PC-3 (cell line): ENCODE measurements at regions of chr9 and their contacts with region 1.

Region 1: GRCh38 chr9:91346652-91347051 is 15.1 kb downstream of the AUH start:
- DNase-seq: peak; percentile 33
- ATAC-seq: peak; percentile 40
- H3K4me3 ChIP-seq: no peak overlapping the region
- H3K27ac ChIP-seq: peak overlapping the region; percentile 79
- H3K4me1 ChIP-seq: peaks cover 45% of the 10 kb centered on the region
- H3K27me3 ChIP-seq: no peaks in the 10 kb centered on the region
- CTCF ChIP-seq: no peak

Region 2: DNA sequence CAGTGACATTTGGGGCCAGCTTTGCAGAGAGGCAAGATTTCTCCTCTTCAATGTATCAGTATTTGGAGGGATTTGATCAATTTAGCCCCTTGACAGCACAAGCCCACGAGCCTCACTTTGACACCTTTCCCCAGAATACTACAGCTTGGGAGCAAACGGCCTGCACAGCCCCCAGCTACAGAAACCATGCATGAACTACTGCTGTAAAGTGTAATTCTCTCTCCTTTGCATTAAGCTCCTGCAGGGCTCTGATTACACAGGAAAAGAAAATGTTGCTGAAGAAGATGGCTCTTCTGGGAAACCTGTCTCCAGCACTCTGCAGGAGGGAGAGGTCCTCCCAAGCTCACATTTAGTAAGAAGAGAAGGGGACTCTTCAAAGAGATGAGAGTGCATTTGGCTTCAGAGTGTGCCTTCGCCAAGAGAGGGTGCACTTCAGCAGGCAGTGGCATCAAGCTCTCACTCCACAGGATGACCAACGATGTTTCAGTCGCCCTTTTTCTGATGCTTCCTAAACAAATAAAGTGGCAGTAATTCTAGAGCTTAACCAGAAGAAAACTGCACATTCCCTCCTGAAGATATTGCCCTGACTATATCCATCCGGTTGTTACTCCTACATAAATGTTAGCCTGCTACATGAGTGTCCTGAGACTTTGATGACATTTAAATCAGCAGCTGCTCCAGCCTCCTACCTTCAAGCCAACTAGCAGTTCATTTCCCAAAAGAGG is 257.1 kb before region 1 on chr9:
- CTCF ChIA-PET with region 1: no interaction called
- POLR2A ChIA-PET with region 1: no interaction called
- intact Hi-C with region 1: loop called (anchors 5 kb)
- DNase-seq: peak; percentile 64
- ATAC-seq: peak; percentile 96
- H3K4me3 ChIP-seq: no peak overlapping the region
- H3K27ac ChIP-seq: 0 out of 2 replicates have a peak overlapping the region, but pooled peaks have one; percentile 6
- H3K4me1 ChIP-seq: no peaks in the 10 kb centered on the region
- H3K27me3 ChIP-seq: no peaks in the 10 kb centered on the region
- CTCF ChIP-seq: peak; percentile 67

Region 3: GRCh38 chr9:91119142-91119541 is 227.5 kb before region 1 on chr9:
- CTCF ChIA-PET with region 1: no interaction called
- POLR2A ChIA-PET with region 1: no interaction called
- intact Hi-C with region 1: no loop called
- DNase-seq: peak; percentile 67
- ATAC-seq: peak; percentile 66
- H3K4me3 ChIP-seq: peak overlapping the region; percentile 34; the same call in 1 of the 2 replicates
- H3K27ac ChIP-seq: peak overlapping the region; percentile 84
- H3K4me1 ChIP-seq: peaks cover 23% of the 10 kb centered on the region
- H3K27me3 ChIP-seq: no peaks in the 10 kb centered on the region
- CTCF ChIP-seq: no peak

Region 4: DNA sequence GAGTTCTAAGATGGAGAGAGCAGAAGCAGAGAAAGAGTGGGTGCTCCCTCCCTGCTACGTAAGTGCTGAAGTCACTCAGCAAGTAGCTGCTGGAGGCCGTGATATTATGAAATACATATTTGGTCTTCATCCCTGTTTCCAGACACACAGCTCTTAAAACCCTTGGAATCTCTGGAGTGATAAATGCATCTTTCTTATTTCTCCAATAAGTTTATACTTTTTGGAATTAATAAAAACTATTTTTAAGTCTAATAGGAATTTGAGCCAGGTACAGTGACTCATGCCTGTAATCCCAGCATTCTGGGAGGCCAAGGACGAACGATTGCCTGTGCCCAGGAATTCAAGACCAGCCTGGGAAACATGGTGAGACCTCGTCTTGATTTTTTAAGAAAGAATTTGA is 45.5 kb before region 1 on chr9:
- CTCF ChIA-PET with region 1: no interaction called
- POLR2A ChIA-PET with region 1: no interaction called
- intact Hi-C with region 1: loop called (anchors 2 kb)
- DNase-seq: peak; percentile 35
- ATAC-seq: no peak
- H3K4me3 ChIP-seq: 0 out of 2 replicates have a peak overlapping the region, but pooled peaks have one; percentile 21
- H3K27ac ChIP-seq: peak overlapping the region; percentile 61
- H3K4me1 ChIP-seq: peaks cover 31% of the 10 kb centered on the region
- H3K27me3 ChIP-seq: no peaks in the 10 kb centered on the region
- CTCF ChIP-seq: no peak

Region 5: GRCh38 chr9:91415290-91415689 is 68.6 kb after region 1 on chr9:
- CTCF ChIA-PET with region 1: no interaction called
- POLR2A ChIA-PET with region 1: interaction called, 4 read pairs
- intact Hi-C with region 1: loop called (anchors 2 kb)
- DNase-seq: no peak
- ATAC-seq: no peak
- H3K4me3 ChIP-seq: no peak overlapping the region
- H3K27ac ChIP-seq: no peak overlapping the region
- H3K4me1 ChIP-seq: peaks cover 55% of the 10 kb centered on the region
- H3K27me3 ChIP-seq: no peaks in the 10 kb centered on the region
- CTCF ChIP-seq: no peak

Region 6: DNA sequence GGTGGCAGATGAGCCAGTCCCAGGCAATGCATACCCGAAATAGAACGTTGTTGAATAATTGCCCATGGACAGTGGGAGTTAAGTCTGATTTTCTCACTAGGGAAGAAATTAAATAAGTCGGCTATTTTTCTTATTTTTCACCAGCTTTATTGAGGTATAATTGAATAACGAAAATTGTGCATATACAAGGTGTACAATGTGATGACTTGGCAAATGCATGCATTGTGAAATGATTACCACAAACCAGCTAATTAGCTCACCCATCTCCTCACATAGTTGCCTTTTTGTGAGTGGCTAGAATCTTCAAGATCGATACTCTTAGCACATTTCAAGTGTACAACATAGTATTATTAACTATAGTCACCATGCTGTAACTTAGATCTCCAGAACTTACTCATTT is 353.8 kb after region 1 on chr9:
- CTCF ChIA-PET with region 1: no interaction called
- POLR2A ChIA-PET with region 1: no interaction called
- intact Hi-C with region 1: no loop called
- DNase-seq: no peak
- ATAC-seq: no peak
- H3K4me3 ChIP-seq: no peak overlapping the region
- H3K27ac ChIP-seq: no peak overlapping the region
- H3K4me1 ChIP-seq: no peaks in the 10 kb centered on the region
- H3K27me3 ChIP-seq: no peaks in the 10 kb centered on the region
- CTCF ChIP-seq: no peak